GM18951 (cell line): ENCODE measurements at regions of chr5 and their contacts with region 1.

Region 1: DNA sequence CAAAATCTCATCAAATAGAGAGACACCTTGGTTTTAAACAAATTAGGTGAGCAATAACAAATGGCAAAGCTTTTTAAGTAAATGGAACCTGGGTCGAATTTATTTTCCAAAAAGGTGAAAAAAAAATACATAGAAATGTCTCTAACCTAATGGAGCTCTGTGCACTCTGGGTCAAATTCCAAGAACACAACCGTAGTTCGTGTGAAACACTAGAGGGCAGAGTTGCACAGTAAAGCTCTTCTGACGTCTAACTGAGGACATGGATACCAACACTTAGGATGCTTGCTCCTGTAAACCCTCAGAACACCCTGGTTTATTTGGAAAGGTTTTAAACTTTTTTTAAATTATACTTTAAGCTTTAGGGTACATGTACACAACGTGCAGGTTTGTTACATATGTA is 18.9 kb downstream of the MARCHF11 start:
- POLR2A ChIP-seq: no peak

Region 2: DNA sequence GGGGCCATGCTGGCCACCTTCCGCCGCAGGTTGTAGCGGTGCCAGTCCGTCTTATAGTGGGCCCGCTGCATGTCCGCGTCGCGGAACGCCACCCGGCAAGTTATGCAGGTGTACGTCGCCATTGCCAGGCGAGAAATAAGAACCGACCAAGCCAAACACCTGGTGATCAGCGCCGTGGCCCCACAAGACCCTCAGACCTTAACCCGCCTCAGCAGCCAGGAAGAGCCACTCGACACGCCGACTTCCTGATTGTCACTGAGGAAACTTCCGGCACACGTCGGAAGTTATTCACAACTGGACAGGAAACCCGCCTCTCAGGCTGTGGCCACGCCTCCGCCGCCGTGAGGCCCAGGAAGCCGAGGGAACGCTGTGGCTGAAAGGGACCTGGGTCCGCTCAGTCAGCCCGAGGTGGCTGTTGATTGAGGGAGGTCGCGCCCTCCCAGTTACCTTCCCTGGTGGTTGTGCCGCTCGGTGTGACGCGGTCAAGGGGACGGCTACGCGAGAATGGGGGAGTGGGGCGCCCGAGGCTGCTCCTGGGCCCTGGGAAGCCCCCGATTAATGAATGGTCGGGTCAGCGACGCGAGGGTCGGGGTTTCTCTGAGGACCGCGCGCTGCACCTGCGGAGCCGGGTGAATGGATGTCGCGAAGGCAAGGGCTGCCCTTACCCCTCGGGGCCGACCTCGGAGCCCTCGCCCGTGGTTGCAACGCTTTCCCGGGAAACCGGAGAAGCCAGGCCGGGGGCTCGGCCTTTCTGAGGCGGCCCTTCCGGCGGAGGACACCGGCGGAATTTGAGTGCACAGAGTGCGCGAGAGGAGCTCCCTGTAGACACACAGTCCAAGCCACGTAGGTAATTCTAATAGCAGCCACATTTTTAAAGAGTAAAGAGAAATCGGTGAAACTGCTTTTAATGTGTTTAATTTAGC is 305.1 kb after region 1 on chr5 and contains the start of gene ZNF622:
- in situ Hi-C with region 1: loop called (anchors 25 kb)
- POLR2A ChIP-seq: peak; percentile 98

Region 3: DNA sequence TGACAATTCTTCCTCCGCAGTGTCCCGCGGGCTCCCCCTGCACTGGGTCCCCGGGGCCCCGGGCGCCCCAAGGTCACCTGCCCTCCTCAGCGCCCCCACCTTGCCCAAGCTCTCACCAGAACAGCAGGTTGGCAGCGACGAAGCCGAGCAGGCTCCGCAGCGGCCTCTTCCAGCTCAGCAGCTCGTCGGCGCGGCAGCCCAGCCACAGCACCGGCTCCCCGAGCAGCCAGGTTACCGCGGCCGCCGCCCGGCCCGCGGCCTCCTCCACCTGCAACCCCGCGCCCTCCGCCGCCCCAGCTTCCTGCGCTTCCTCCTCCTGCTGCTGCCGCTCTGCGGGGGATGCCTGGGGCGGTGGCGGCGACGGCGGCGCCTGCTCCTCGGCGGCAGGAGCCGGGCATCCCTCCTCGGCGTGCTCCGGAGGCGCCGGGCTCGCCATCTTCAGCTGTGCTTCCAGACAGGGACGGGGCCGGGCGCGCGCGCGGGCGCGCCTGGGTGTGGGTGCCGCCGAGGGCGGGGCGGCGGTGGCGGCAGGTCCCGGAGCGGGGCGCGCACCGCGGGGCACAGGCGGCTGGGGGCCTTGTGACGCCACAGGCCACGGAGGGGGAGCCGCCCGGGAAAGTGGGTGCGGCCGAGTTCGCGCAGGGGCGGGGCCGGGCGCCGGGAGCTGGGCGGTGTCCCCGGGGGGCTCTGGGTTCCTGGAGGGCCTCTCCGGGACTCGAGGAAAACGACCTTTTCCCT is 456.0 kb after region 1 on chr5 and contains the start of gene RETREG1:
- in situ Hi-C with region 1: no loop called
- POLR2A ChIP-seq: peak; percentile 47

Region 4: DNA sequence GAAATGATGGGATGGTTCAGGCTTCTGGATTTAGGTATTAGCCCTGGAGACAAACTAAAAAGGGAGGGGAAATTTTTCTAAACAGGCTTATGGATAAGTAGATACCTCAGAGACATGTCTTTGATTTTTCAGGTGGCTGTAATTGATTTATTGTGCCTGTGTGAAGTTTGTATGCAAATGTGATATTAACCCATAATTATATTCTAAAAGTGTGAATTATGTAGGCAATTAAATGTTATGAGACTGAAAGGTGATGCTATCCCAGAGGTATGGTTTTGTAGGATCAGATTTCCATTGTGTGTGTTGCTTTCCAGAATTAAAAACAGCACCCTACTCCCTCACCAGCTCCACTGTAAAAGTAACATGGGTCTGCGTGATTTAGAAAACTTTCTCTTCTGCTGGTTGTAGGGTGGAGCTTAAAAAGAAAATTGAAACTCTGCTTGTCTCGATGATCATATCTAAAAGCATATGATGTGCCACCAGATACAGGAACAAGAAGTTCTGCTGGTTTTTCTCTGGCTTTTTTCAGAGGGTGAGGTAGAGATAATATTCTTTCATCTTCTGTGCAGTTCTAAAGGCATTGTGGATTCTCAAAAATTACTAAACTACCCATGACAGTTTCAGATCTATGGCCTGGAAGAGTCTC is 1265.5 kb after region 1 on chr5:
- in situ Hi-C with region 1: no loop called
- POLR2A ChIP-seq: no peak